CD8-positive, alpha-beta T cell (primary cell): ENCODE measurements at regions of chr1 and their contacts with region 1.

Region 1: DNA sequence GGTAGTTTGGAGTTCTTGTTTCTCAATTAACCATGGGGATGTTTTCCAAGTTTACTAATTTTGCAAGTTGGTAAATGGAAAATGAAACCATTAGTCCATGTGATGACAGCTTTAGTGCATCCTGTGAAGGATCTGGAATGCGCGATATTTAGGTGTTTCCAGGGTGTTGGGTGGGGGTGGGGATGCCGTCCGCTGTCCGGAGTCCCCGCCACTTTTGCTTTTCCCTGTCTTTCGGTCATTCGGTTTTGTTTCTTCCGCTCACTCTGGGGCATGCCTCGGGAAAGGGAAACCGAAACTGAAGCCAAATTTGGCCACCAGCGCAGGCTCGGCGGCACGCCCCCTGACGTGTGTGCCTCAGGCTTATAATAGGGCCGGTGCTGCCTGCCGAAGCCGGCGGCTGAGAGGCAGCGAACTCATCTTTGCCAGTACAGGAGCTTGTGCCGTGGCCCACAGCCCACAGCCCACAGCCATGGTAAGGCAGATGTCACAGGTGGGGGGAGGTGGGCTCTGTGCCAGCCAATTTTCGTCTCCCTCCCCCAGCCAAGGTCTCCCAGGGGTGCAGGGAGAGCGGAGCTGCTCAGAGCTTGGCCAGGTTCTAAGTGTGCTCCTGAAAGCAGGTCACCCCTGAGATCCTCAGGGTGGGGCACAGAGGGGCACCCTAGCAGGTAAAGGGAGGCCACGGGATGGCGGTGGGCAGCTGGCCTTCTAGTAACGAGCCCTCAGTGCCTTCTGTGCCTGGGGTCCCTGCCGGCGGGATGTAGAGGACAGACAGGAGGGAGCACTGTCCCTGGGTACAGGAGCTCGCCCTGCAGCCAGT is at the start of gene ISG15:
- DNase-seq: peak; percentile 79 to 96 (median 90)
- ATAC-seq: peak; percentile 94
- H3K4me3 ChIP-seq: peak within 1 kb of the TSS; percentile 75 to 78
- H3K4me3 Mint-ChIP-seq: peak within 1 kb of the TSS; percentile 98
- H3K27ac ChIP-seq: peak within 1 kb of the TSS; percentile 79 to 87
- H3K27ac Mint-ChIP-seq: peak within 1 kb of the TSS; percentile 99
- H3K4me1 ChIP-seq: peaks cover 23% of the 10 kb centered on the region
- H3K4me1 Mint-ChIP-seq: peaks cover 40% of the 10 kb centered on the region
- H3K27me3 ChIP-seq: no peaks in the 10 kb centered on the region
- H3K27me3 Mint-ChIP-seq: peaks cover 4% of the 10 kb centered on the region
- CTCF ChIP-seq: no peak
- total RNA-seq, gene ISG15: 56.4 to 58.4 TPM

Region 2: GRCh38 chr1:983799-984473 is 29.4 kb before region 1 on chr1:
- CTCF ChIA-PET with region 1: interaction called, 20 read pairs
- POLR2A ChIA-PET with region 1: interaction called, 3 read pairs
- intact Hi-C with region 1: no loop called
- DNase-seq: peak in 8 of 9 experiments; percentile 49 to 80 (median 69)
- ATAC-seq: peak; percentile 95
- H3K4me3 ChIP-seq: no peak overlapping the region
- H3K4me3 Mint-ChIP-seq: no peak overlapping the region
- H3K27ac ChIP-seq: no peak overlapping the region
- H3K27ac Mint-ChIP-seq: no peak overlapping the region
- H3K4me1 ChIP-seq: no peaks in the 10 kb centered on the region
- H3K4me1 Mint-ChIP-seq: no peaks in the 10 kb centered on the region
- H3K27me3 ChIP-seq: peaks cover 0 to 5% of the 10 kb centered on the region in 2 experiments
- H3K27me3 Mint-ChIP-seq: peaks cover 16% of the 10 kb centered on the region
- CTCF ChIP-seq: peak; percentile 86

Region 3: DNA sequence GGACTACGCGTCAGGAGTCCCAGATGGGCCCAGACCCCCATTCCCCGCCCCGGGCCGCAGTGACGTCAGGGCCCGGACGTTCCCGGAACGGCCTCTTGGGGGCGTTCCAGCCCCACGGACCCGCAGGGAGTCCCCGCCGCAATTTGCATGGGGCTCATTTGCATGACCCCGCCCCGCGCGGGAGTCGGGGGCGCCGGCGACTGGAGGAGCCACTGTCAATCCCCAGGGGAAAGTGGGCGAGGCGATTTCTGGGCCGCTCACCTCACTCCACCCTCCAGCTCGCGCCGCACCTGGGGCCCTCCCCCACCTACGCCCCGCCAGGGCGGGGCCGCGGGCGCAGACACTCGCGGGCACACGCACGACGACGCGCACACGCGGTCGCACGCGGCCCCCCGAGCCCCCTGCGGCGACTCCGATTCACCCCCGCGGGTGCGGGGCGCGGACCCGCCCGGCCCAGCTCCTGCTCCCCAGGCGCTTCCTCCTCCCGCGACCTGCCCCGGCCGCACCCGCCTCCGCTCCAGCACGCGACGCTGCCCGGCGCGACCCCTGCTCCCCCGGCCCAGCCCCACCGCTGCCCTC is 19.8 kb after region 1 on chr1:
- CTCF ChIA-PET with region 1: interaction called, 4 read pairs
- POLR2A ChIA-PET with region 1: no interaction called
- intact Hi-C with region 1: loop called in 1 of 2 experiments (anchors 2 kb)
- DNase-seq: peak; percentile 72 to 93 (median 85)
- ATAC-seq: peak; percentile 94
- H3K4me3 ChIP-seq: peak overlapping the region; percentile 23 to 24
- H3K4me3 Mint-ChIP-seq: peak overlapping the region; percentile 74
- H3K27ac ChIP-seq: no peak overlapping the region
- H3K27ac Mint-ChIP-seq: no peak overlapping the region
- H3K4me1 ChIP-seq: peaks cover 13% of the 10 kb centered on the region
- H3K4me1 Mint-ChIP-seq: peaks cover 7% of the 10 kb centered on the region
- H3K27me3 ChIP-seq: peaks cover 0 to 27% of the 10 kb centered on the region in 2 experiments
- H3K27me3 Mint-ChIP-seq: peaks cover 20% of the 10 kb centered on the region
- CTCF ChIP-seq: peak; percentile 95

Region 4: GRCh38 chr1:1059494-1060280 is 46.4 kb after region 1 on chr1:
- CTCF ChIA-PET with region 1: interaction called, 24 read pairs
- POLR2A ChIA-PET with region 1: interaction called, 3 read pairs
- intact Hi-C with region 1: loop called in 1 of 2 experiments (anchors 1 kb)
- DNase-seq: peak; percentile 86 to 96 (median 90)
- ATAC-seq: peak; percentile 67
- H3K4me3 ChIP-seq: peak overlapping the region; percentile 19 to 66
- H3K4me3 Mint-ChIP-seq: peak overlapping the region; percentile 51
- H3K27ac ChIP-seq: no peak overlapping the region
- H3K27ac Mint-ChIP-seq: no peak overlapping the region
- H3K4me1 ChIP-seq: peaks cover 45% of the 10 kb centered on the region
- H3K4me1 Mint-ChIP-seq: peaks cover 13% of the 10 kb centered on the region
- H3K27me3 ChIP-seq: peaks cover 0 to 38% of the 10 kb centered on the region in 2 experiments
- H3K27me3 Mint-ChIP-seq: peaks cover 17% of the 10 kb centered on the region
- CTCF ChIP-seq: no peak

Region 5: GRCh38 chr1:1250786-1251284 is 237.5 kb after region 1 on chr1:
- CTCF ChIA-PET with region 1: no interaction called
- POLR2A ChIA-PET with region 1: no interaction called
- intact Hi-C with region 1: no loop called
- DNase-seq: peak; percentile 30 to 91 (median 74)
- ATAC-seq: peak; percentile 99
- H3K4me3 ChIP-seq: peak overlapping the region in 1 of 2 experiments; percentile 10
- H3K4me3 Mint-ChIP-seq: peak overlapping the region; percentile 72
- H3K27ac ChIP-seq: peak overlapping the region; percentile 40 to 63
- H3K27ac Mint-ChIP-seq: peak overlapping the region; percentile 93
- H3K4me1 ChIP-seq: peaks cover 25% of the 10 kb centered on the region
- H3K4me1 Mint-ChIP-seq: peaks cover 15% of the 10 kb centered on the region
- H3K27me3 ChIP-seq: peaks cover 0 to 6% of the 10 kb centered on the region in 2 experiments
- H3K27me3 Mint-ChIP-seq: no peaks in the 10 kb centered on the region
- CTCF ChIP-seq: no peak